Activated CD4-positive, alpha-beta T cell treated with anti-CD3 and anti-CD28 coated beads, Interleukin-2, amount 10 ng/mL, durations not matched to agents 7 days and 5 days (primary cell): ENCODE measurements at regions of chr2 and their contacts with region 1.

Region 1: GRCh38 chr2:127945281-127945680 is 59.5 kb upstream of the AMMECR1L start:
- DNase-seq: no peak
- H3K4me3 Mint-ChIP-seq: no peak overlapping the region
- H3K27ac Mint-ChIP-seq: no peak overlapping the region
- H3K4me1 Mint-ChIP-seq: no peaks in the 10 kb centered on the region
- H3K27me3 Mint-ChIP-seq: no peaks in the 10 kb centered on the region

Region 2: DNA sequence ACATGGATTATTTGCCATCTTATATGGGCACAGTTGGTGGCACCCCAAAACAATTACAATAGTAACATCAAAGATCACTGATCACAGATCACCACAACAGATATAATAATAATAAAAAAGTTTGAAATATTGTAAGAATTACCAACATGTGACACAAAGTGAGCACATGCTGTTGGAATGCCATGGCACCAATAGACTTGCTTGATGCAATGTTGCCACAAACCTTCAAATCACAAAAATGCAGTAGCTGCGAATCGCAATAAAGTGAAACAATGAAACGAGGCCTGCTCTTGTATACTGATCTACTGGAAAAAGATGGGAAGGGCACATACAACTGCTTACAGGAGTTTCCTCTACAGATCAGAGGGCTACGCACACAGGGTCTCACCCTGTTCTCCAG is 27.4 kb before region 1 on chr2:
- CTCF ChIA-PET with region 1: no interaction called
- POLR2A ChIA-PET with region 1: no interaction called
- DNase-seq: no peak
- H3K4me3 Mint-ChIP-seq: no peak overlapping the region
- H3K27ac Mint-ChIP-seq: no peak overlapping the region
- H3K4me1 Mint-ChIP-seq: no peaks in the 10 kb centered on the region
- H3K27me3 Mint-ChIP-seq: no peaks in the 10 kb centered on the region

Region 3: GRCh38 chr2:127968610-127969339 is 23.5 kb after region 1 on chr2:
- CTCF ChIA-PET with region 1: interaction called, 3 read pairs
- POLR2A ChIA-PET with region 1: interaction called, 13 read pairs
- DNase-seq: no peak
- H3K4me3 Mint-ChIP-seq: no peak overlapping the region
- H3K27ac Mint-ChIP-seq: no peak overlapping the region
- H3K4me1 Mint-ChIP-seq: no peaks in the 10 kb centered on the region
- H3K27me3 Mint-ChIP-seq: no peaks in the 10 kb centered on the region